ENCODE measurements at regions of chr7 and their contacts with region 1.

Region 1: GRCh38 chr7:73433924-73434700 is 534 bp downstream of the FZD9 start:
- DNase-seq: peak in 1 of 9 donors; percentile 37
- ATAC-seq: peak; percentile 34
- H3K4me3 ChIP-seq: no peak overlapping the region
- H3K4me3 Mint-ChIP-seq: peak overlapping the region in 9 of 10 donors; percentile 28 to 78 (median 62)
- H3K27ac ChIP-seq: no peak overlapping the region
- H3K27ac Mint-ChIP-seq: no peak overlapping the region
- H3K4me1 ChIP-seq: no peaks in the 10 kb centered on the region
- H3K4me1 Mint-ChIP-seq: peaks cover 5 to 15% (median 10%) of the 10 kb centered on the region in 7 donors
- H3K27me3 ChIP-seq: no peaks in the 10 kb centered on the region
- H3K27me3 Mint-ChIP-seq: peaks cover 0 to 4% (median 0%) of the 10 kb centered on the region in 5 donors

Region 2: DNA sequence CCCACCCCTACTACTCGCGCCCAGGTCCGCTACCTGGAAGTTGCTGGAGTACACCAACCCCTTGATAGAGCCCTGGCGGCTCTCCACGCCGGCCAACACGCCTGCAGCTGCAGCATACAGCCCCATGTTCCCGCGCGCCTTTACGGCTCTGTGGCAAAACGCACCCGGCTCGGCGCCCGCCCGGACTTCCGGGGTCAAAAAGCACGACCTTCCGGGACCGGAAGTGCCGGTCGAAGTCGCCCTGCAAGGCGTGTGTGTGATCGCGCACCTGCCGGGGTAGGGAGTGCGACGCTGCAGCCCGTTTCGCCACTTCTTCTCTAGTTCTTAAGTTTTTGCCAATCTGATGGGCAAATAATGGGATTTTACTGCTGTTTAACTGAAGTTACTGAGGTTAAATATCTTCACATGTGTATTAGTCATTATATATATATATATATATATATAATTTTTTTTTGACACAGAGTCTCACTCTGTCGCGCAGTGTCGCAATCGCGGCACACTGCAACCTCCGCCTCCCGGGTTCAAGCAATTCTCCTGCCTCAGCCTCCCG is 125.4 kb before region 1 on chr7 and contains the start of gene NSUN5:
- CTCF ChIA-PET with region 1: no interaction called
- POLR2A ChIA-PET with region 1: no interaction called
- intact Hi-C with region 1: loop called in 1 of 2 experiments (anchors 1 kb)
- DNase-seq: peak; percentile 82 to 91 (median 88)
- ATAC-seq: peak; percentile 98
- H3K4me3 ChIP-seq: peak within 1 kb of the TSS; percentile 79
- H3K4me3 Mint-ChIP-seq: peak within 1 kb of the TSS; percentile 88 to 99 (median 96)
- H3K27ac ChIP-seq: peak within 1 kb of the TSS; percentile 72
- H3K27ac Mint-ChIP-seq: peak within 1 kb of the TSS; percentile 86 to 97 (median 92)
- H3K4me1 ChIP-seq: peaks cover 7 to 15% of the 10 kb centered on the region in 2 donors
- H3K4me1 Mint-ChIP-seq: peaks cover 24 to 42% (median 30%) of the 10 kb centered on the region in 7 donors
- H3K27me3 ChIP-seq: no peaks in the 10 kb centered on the region
- H3K27me3 Mint-ChIP-seq: no peaks in the 10 kb centered on the region
- total RNA-seq, gene NSUN5: 34.3 to 81.6 (median 46.0) TPM

Region 3: DNA sequence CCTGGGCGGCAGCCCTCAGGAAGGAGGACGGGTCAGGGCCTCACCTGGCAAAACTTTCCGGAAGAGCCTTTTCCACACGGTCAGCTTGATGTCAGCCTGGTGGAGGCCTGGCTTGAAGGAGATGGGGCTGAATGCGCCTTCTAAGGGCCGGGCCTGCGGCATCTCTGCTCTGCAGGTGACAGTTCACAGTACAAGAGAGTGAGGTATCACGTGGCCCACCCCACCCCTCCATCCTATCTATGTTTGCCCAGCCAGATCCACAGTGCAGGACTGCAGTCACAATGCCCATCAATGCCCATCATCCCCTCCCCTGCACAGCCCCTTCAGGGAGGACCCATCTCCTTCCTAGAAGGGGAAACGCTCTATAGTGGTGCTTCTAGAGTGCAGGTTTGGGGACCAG is 117.6 kb before region 1 on chr7:
- CTCF ChIA-PET with region 1: interaction called, 3 read pairs
- POLR2A ChIA-PET with region 1: no interaction called
- intact Hi-C with region 1: loop called in 1 of 2 experiments (anchors 5 kb)
- DNase-seq: no peak
- ATAC-seq: no peak
- H3K4me3 ChIP-seq: no peak overlapping the region
- H3K4me3 Mint-ChIP-seq: no peak overlapping the region
- H3K27ac ChIP-seq: no peak overlapping the region
- H3K27ac Mint-ChIP-seq: no peak overlapping the region
- H3K4me1 ChIP-seq: no peaks in the 10 kb centered on the region
- H3K4me1 Mint-ChIP-seq: no peaks in the 10 kb centered on the region
- H3K27me3 ChIP-seq: no peaks in the 10 kb centered on the region
- H3K27me3 Mint-ChIP-seq: no peaks in the 10 kb centered on the region